K562 (cell line): ENCODE measurements at regions of chr9 and their contacts with region 1.

Region 1: DNA sequence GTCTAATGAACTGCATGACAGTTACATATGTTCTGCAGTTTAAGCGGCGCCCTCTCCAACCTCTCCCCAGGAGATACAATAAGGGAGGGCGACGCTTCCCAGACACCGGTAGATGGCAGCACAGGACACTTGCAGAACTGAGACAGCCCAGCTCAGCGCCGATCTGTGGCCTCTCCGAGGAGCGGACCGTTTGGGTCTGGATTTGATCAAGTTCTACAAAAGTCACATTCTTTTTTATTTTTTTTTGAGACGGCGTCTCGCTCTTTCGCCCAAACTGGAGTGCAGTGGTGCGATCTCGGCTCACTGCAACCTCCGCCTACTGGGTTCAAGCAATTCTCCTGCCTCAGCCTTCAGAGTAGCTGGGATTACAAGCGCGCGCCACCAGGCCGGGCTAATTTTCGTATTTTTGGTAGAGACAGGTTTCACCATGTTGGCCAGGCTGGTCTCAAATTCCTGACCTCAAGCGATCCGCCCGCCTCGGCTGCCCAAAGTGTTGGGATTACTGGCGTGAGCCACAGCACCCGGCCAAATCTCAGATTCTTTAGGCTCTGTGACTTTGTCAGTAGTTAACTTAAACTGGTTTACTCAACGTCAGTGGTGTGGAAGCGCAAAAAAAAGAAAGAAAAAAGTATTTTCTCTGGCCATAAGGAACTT is 1.4 kb upstream of the ATOSB start:
- DNase-seq: peak; percentile 71 to 92 (median 72)
- ATAC-seq: peak; percentile 80
- H3K4me3 ChIP-seq: peak overlapping the region; percentile 58
- H3K27ac ChIP-seq: peak overlapping the region; percentile 62; the same call in 2 of the 3 replicates
- H3K4me1 ChIP-seq: peaks cover 20 to 26% of the 10 kb centered on the region in 2 experiments
- H3K27me3 ChIP-seq: no peaks in the 10 kb centered on the region
- CTCF ChIP-seq: peak; percentile 89 to 97 (median 94)
- EP300 ChIP-seq: no peak
- POLR2A ChIP-seq: no peak
- RAD21 ChIP-seq: peak; percentile 74 to 86

Region 2: DNA sequence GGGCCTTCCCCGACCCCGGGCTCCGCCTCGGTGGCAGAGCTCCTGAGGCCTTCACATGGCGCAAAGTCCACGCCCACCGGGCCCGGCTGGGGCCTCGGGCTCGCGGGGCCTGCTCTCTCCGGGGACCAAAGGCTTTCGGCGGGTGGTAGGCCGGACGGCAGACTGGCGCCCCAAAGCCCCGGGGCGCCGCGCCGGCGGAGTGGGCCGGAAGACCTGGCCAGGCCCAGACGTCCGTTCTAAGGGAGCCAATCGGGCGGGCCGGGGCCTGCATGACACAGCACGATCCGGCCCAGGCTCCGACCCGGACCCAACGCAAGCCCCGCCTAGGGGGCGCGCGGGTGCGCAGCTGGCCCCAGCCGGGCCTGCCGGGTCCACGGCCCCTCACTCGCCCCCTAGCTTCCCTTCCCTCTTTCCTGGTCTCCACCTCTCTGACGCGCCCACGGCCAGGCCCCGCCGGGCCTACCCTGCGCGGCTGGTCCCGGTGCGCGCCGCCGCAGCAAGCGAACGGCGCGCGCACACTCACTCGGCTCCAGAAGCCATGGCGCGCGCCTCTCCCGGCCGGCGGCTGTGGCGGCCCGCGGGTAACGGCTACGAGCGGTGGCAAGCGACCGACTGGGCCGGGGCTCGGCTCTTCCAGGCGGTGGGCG is 45.1 kb before region 1 on chr9:
- CTCF ChIA-PET with region 1: no interaction called
- POLR2A ChIA-PET with region 1: interaction called, 4 read pairs
- in situ Hi-C with region 1: no loop called
- intact Hi-C with region 1: loop called (anchors 2 kb)
- DNase-seq: peak; percentile 81 to 90 (median 87)
- ATAC-seq: peak; percentile 92
- H3K4me3 ChIP-seq: peak overlapping the region; percentile 99
- H3K27ac ChIP-seq: peak overlapping the region; percentile 97
- H3K4me1 ChIP-seq: peaks cover 5 to 15% of the 10 kb centered on the region in 2 experiments; a peak in 3 of 5 replicates
- H3K27me3 ChIP-seq: no peaks in the 10 kb centered on the region
- CTCF ChIP-seq: peak; percentile 51 to 77 (median 56)
- EP300 ChIP-seq: no peak
- POLR2A ChIP-seq: no peak
- RAD21 ChIP-seq: peak in 1 of 2 experiments; percentile 8; a peak in 1 of 4 replicates

Region 3: GRCh38 chr9:35096035-35096849 is 20.8 kb before region 1 on chr9 and contains the start of gene PIGO:
- CTCF ChIA-PET with region 1: no interaction called
- POLR2A ChIA-PET with region 1: interaction called, 3 read pairs
- in situ Hi-C with region 1: no loop called
- intact Hi-C with region 1: loop called (anchors 2 kb)
- DNase-seq: peak; percentile 81 to 90 (median 82)
- ATAC-seq: peak; percentile 97
- H3K4me3 ChIP-seq: peak within 1 kb of the TSS; percentile 99
- H3K27ac ChIP-seq: peak within 1 kb of the TSS; percentile 100
- H3K4me1 ChIP-seq: peaks cover 6 to 15% of the 10 kb centered on the region in 2 experiments; a peak in 4 of 5 replicates
- H3K27me3 ChIP-seq: no peaks in the 10 kb centered on the region
- CTCF ChIP-seq: peak; percentile 78 to 85 (median 82)
- EP300 ChIP-seq: no peak
- POLR2A ChIP-seq: peak; percentile 90
- RAD21 ChIP-seq: peak; percentile 57 to 61
- polyA plus RNA-seq, gene PIGO: 5.6 to 5.9 TPM

Region 4: GRCh38 chr9:35161713-35162604 is 44.9 kb after region 1 on chr9 and contains the start of gene UNC13B:
- CTCF ChIA-PET with region 1: no interaction called
- POLR2A ChIA-PET with region 1: no interaction called
- in situ Hi-C with region 1: no loop called
- intact Hi-C with region 1: loop called (anchors 5 kb)
- DNase-seq: peak; percentile 93 to 96 (median 95)
- ATAC-seq: peak; percentile 97
- H3K4me3 ChIP-seq: peak within 1 kb of the TSS; percentile 78
- H3K27ac ChIP-seq: peak within 1 kb of the TSS; percentile 71
- H3K4me1 ChIP-seq: peaks cover 4 to 6% of the 10 kb centered on the region in 2 experiments; a peak in 4 of 5 replicates
- H3K27me3 ChIP-seq: no peaks in the 10 kb centered on the region
- CTCF ChIP-seq: no peak
- EP300 ChIP-seq: no peak
- POLR2A ChIP-seq: peak; percentile 76
- RAD21 ChIP-seq: no peak
- polyA plus RNA-seq, gene UNC13B: 2.4 to 3.9 TPM

Region 5: GRCh38 chr9:35258676-35259474 is 141.8 kb after region 1 on chr9:
- CTCF ChIA-PET with region 1: interaction called, 11 read pairs
- POLR2A ChIA-PET with region 1: no interaction called
- in situ Hi-C with region 1: loop called (anchors 5 kb)
- intact Hi-C with region 1: loop called (anchors 1 kb)
- DNase-seq: peak in 2 of 4 experiments; percentile 19 to 64
- ATAC-seq: peak; percentile 76
- H3K4me3 ChIP-seq: no peak overlapping the region
- H3K27ac ChIP-seq: no peak overlapping the region
- H3K4me1 ChIP-seq: no peaks in the 10 kb centered on the region
- H3K27me3 ChIP-seq: no peaks in the 10 kb centered on the region
- CTCF ChIP-seq: peak; percentile 58 to 71 (median 61); a peak in 4 of 6 replicates
- EP300 ChIP-seq: no peak
- POLR2A ChIP-seq: no peak
- RAD21 ChIP-seq: peak; percentile 55 to 75

Region 6: GRCh38 chr9:35374436-35374835 is 257.4 kb after region 1 on chr9:
- CTCF ChIA-PET with region 1: no interaction called
- POLR2A ChIA-PET with region 1: no interaction called
- in situ Hi-C with region 1: no loop called
- intact Hi-C with region 1: no loop called
- DNase-seq: no peak
- ATAC-seq: no peak
- H3K4me3 ChIP-seq: no peak overlapping the region
- H3K27ac ChIP-seq: no peak overlapping the region
- H3K4me1 ChIP-seq: no peaks in the 10 kb centered on the region
- H3K27me3 ChIP-seq: no peaks in the 10 kb centered on the region
- CTCF ChIP-seq: no peak
- EP300 ChIP-seq: no peak
- POLR2A ChIP-seq: no peak
- RAD21 ChIP-seq: no peak

Region 7: GRCh38 chr9:35470894-35471293 is 353.9 kb after region 1 on chr9:
- CTCF ChIA-PET with region 1: no interaction called
- POLR2A ChIA-PET with region 1: interaction called, 3 read pairs
- in situ Hi-C with region 1: loop called (anchors 5 kb)
- intact Hi-C with region 1: no loop called
- DNase-seq: no peak
- ATAC-seq: no peak
- H3K4me3 ChIP-seq: no peak overlapping the region
- H3K27ac ChIP-seq: no peak overlapping the region
- H3K4me1 ChIP-seq: no peaks in the 10 kb centered on the region
- H3K27me3 ChIP-seq: no peaks in the 10 kb centered on the region; a peak in 1 of 5 replicates
- CTCF ChIP-seq: no peak
- EP300 ChIP-seq: no peak
- POLR2A ChIP-seq: no peak
- RAD21 ChIP-seq: no peak

Region 8: DNA sequence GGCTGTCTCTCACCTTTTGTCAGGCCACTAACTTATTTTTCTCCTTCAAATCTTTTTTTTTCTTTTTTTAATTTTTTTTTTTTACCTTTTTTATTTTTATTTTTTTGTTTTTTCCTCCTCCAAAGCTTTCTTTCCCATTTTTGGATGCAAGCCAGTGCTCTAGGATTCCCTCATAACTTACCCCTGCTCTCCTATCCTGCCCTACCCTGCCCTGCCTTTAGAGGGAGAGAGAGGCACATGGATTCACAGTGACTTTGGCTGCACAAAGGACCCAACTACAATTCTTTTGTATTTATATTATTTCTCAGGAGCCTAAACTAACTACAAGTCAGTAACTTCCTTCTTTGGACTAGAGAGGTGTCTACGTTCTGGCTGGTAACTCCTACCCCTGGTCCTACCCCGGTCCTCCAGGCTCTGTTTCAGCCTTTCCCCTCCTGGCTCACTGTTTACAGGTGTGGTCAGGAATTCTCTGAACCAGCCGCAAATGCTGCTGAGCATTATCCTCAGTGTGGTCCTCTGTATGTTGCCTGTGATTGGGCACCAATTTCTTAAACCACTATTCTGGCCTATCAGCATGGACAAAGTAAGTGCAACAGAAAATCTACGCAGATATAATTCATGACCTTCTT is 364.4 kb after region 1 on chr9:
- CTCF ChIA-PET with region 1: interaction called, 13 read pairs
- POLR2A ChIA-PET with region 1: no interaction called
- in situ Hi-C with region 1: no loop called
- intact Hi-C with region 1: loop called (anchors 1 kb)
- DNase-seq: peak; percentile 23 to 65 (median 46)
- ATAC-seq: peak; percentile 90
- H3K4me3 ChIP-seq: no peak overlapping the region
- H3K27ac ChIP-seq: no peak overlapping the region
- H3K4me1 ChIP-seq: no peaks in the 10 kb centered on the region; a peak in 1 of 5 replicates
- H3K27me3 ChIP-seq: no peaks in the 10 kb centered on the region; a peak in 1 of 5 replicates
- CTCF ChIP-seq: peak; percentile 68 to 80 (median 79)
- EP300 ChIP-seq: no peak
- POLR2A ChIP-seq: no peak
- RAD21 ChIP-seq: peak; percentile 64 to 76